ENCODE measurements at regions of chr13 and their contacts with region 1.

Region 1: DNA sequence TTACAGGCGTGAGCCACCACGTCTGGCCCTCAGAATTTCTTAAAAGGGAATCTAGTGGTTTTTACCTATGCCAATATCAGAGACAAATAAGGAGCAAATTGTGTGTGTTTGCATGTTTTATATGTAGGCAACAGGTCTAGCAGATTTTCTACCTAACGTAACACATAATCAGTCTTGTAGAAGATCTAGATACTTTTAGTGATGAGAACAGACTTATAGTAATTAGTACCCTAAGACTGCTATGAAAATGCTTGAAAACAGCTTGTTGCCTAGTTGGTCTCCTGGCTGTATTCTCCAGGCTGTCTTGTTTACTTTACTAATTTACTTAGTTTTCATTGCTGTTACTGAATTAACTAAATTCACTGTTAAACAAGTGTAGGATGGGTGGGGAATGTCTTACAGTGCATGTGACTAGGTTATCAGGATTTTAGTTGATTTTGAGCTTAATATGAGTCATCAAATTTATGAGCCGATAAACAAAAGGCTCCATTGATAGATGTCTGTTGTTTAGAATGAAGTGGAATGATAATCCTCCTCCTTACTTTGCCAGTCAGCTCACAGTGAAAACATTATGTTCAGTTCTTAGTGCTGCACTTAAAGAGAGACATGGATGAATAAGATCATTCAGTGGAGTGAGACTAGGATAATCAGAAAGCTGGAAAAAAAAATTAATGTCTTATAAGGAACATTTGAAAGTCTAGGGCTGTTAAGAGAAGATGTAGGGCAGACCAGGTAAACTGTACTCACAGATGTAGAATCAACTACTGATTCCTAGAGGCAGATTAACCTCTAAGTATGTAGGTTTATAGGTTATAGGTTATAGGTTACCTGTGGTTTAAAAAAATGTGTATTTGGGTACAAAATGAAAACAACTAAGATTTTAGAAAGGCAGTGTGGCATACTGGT is 22.4 kb downstream of the GTF2F2 start:
- DNase-seq: peak; percentile 67
- ATAC-seq: peak; percentile 85
- H3K4me3 ChIP-seq: 0 out of 2 replicates have a peak overlapping the region, but pooled peaks have one; percentile 14
- H3K27ac ChIP-seq: peak overlapping the region; percentile 57
- H3K4me1 ChIP-seq: peaks cover 21% of the 10 kb centered on the region
- H3K27me3 ChIP-seq: no peaks in the 10 kb centered on the region
- CTCF ChIP-seq: no peak

Region 2: DNA sequence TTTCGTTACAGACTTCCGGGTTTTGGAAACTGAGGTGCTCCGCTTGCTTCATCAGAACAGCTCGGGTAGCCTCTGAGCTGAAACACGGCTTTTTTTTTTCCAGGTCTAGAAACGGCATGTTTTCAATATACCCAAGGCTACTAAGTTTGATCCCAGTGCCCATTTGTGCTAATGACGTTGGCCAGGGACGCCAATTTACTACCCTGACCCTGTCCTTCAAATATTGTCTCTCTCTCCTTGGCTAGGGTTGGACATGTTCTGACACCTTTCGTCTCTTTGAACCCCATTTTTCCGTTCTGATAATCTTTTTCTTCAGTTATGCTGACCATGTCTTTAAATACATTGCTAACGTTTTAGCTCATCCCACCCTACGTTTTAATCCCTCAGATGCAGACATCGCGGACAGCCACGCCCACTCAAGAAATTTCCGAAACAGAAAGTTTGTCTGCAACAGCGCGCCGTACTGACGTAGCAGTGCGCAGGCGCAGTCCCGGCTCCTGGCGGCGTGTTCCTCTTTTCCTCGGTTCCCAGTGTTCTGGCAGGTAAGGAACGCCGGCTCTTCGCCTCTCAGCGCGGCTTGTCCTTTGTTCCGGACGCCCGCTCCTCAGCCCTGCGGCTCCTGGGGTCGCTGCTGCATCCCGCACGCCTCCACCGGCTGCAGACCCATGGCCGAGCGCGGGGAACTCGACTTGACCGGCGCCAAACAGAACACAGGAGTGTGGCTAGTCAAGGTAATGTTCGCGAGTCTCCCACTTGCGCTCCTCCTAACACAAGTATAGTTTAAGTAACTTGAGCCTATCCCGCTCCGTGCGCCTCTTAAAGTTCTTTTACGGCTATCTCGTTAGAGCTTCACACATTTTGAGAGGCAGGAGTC is 22.5 kb before region 1 on chr13 and contains the start of gene GTF2F2:
- CTCF ChIA-PET with region 1: no interaction called
- POLR2A ChIA-PET with region 1: no interaction called
- intact Hi-C with region 1: no loop called
- DNase-seq: peak; percentile 84
- ATAC-seq: peak; percentile 86
- H3K4me3 ChIP-seq: peak within 1 kb of the TSS; percentile 99
- H3K27ac ChIP-seq: peak within 1 kb of the TSS; percentile 83
- H3K4me1 ChIP-seq: peaks cover 13% of the 10 kb centered on the region
- H3K27me3 ChIP-seq: no peaks in the 10 kb centered on the region
- CTCF ChIP-seq: no peak
- total RNA-seq, gene GTF2F2: 24.8 and 28.3 TPM in 2 replicates

Region 3: GRCh38 chr13:45206340-45206739 is 63.6 kb after region 1 on chr13:
- CTCF ChIA-PET with region 1: no interaction called
- POLR2A ChIA-PET with region 1: no interaction called
- intact Hi-C with region 1: loop called (anchors 5 kb)
- DNase-seq: peak; percentile 89
- ATAC-seq: peak; percentile 96
- H3K4me3 ChIP-seq: no peak overlapping the region
- H3K27ac ChIP-seq: peak overlapping the region; percentile 80
- H3K4me1 ChIP-seq: peaks cover 50% of the 10 kb centered on the region
- H3K27me3 ChIP-seq: no peaks in the 10 kb centered on the region
- CTCF ChIP-seq: no peak

Measured in PC-3 (cell line).